ENCODE measurements at regions of chr7 and their contacts with region 1.

Region 1: GRCh38 chr7:66033471-66034385 is 41.9 kb upstream of the ASL start:
- DNase-seq: no peak
- ATAC-seq: no peak
- H3K4me3 ChIP-seq: no peak overlapping the region
- H3K27ac ChIP-seq: no peak overlapping the region
- H3K4me1 ChIP-seq: 0 out of 3 replicates have a peak, but pooled peaks cover 5% of the 10 kb centered on the region
- CTCF ChIP-seq: no peak
- EP300 ChIP-seq: no peak
- POLR2A ChIP-seq: no peak
- RAD21 ChIP-seq: no peak

Region 2: DNA sequence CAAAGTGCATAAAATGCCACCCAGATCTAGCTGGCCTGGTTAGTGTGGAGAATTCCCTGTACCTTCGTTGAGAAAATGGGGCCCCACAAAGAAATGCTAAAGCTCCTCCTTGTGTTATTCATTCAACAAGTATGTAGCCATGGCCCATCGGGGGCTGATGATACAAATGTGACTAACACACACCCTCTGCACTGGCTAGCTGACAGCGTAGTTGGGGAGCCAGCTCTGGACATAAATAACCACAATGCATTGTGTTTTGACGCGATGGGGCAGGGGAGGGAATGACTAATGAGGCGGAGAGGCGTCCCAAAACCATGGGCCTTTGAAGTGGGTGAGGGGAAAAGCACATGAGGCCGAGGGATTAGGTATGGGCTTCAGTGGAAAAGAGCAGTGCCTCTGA is 13.7 kb after region 1 on chr7:
- CTCF ChIA-PET with region 1: interaction called, 13 read pairs
- POLR2A ChIA-PET with region 1: no interaction called
- DNase-seq: peak; percentile 31 to 77
- ATAC-seq: peak; percentile 79 to 82
- H3K4me3 ChIP-seq: no peak overlapping the region
- H3K27ac ChIP-seq: peak overlapping the region; percentile 63 to 87; a peak in 5 of 6 replicates
- H3K4me1 ChIP-seq: peaks cover 38% of the 10 kb centered on the region
- CTCF ChIP-seq: no peak
- EP300 ChIP-seq: peak in 1 of 2 experiments; percentile 18; a peak in 1 of 5 replicates
- POLR2A ChIP-seq: no peak
- RAD21 ChIP-seq: no peak; a peak in 1 of 5 replicates

Region 3: DNA sequence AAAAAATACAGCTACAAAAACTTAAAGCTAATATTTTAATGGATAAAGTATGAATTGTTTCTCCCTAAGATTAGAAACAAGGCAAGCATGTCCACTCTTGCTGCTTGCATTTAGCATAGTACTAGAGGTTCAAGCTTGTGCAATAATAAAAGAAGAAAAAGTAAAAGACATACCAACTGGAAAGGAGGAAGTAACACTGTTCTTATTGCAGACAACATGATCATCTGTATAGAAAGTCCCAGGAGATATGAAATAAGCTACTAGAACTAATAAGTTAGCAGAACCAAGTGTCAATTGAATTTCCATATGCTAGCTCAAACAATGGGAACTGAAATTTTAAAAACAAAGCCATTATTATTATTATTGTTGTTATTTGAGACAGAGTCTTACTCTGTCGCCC is 686.8 kb after region 1 on chr7:
- CTCF ChIA-PET with region 1: no interaction called
- POLR2A ChIA-PET with region 1: no interaction called
- DNase-seq: no peak
- ATAC-seq: no peak
- H3K4me3 ChIP-seq: no peak overlapping the region
- H3K27ac ChIP-seq: no peak overlapping the region
- H3K4me1 ChIP-seq: no peaks in the 10 kb centered on the region
- CTCF ChIP-seq: no peak
- EP300 ChIP-seq: no peak
- POLR2A ChIP-seq: no peak
- RAD21 ChIP-seq: no peak